ENCODE measurements at regions of chr17 and their contacts with region 1.

Region 1: DNA sequence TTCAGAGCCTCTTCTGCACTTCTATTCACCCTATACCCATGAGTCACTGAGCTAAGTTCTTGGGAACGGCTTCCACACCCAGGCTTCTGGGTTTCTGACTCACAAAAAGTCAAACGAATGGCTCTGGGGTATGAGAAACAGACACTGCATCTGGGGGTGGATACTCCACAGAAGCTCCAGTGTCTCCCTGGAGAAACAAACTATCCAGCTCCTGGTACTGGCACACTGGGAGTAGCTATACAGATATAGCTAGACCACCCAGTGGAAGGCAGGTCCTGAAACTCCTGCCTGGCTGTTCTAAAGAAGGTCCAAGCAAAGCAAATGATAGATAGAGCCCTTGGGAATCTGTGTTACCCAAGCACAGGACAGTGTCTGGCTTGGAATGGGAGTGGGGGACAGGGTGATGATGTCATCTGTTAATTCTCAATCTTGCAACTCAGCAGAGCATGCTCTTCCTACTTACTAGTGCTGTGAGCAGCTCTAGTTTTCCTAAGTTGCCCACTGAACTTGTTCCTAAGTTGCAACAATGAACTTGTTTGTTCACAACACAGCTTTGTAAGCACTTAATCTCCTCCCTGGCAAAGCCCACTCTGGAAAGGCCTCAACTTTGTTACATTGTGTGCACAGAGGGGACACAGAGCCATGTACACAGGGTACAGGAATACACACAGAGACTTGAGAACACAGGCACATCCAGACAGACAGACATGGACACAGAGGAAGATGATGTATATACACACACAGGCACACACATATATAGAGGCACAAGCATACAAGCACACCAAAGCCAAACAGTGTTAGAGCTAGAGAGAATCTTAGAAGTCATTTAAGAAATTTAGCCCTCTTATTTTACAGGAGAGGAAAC is 6.7 kb downstream of the MMP28 start:
- DNase-seq: peak in 1 of 2 experiments; percentile 85
- H3K4me3 ChIP-seq: no peak overlapping the region; the same call in 1 of the 2 replicates
- H3K27ac ChIP-seq: peak overlapping the region; percentile 80
- H3K4me1 ChIP-seq: peaks cover 66% of the 10 kb centered on the region
- H3K27me3 ChIP-seq: peaks cover 6% of the 10 kb centered on the region; the same call in 1 of the 2 replicates
- CTCF ChIP-seq: no peak

Region 2: GRCh38 chr17:35799942-35800341 is 11.2 kb after region 1 on chr17:
- CTCF ChIA-PET with region 1: no interaction called
- POLR2A ChIA-PET with region 1: no interaction called
- intact Hi-C with region 1: loop called (anchors 1 kb)
- DNase-seq: peak in 1 of 2 experiments; percentile 70
- H3K4me3 ChIP-seq: no peak overlapping the region
- H3K27ac ChIP-seq: no peak overlapping the region
- H3K4me1 ChIP-seq: peaks cover 2% of the 10 kb centered on the region; the same call in 1 of the 2 replicates
- H3K27me3 ChIP-seq: peaks cover 27% of the 10 kb centered on the region
- CTCF ChIP-seq: no peak

Region 3: GRCh38 chr17:35825206-35825605 is 36.5 kb after region 1 on chr17:
- CTCF ChIA-PET with region 1: no interaction called
- POLR2A ChIA-PET with region 1: interaction called, 19 read pairs
- intact Hi-C with region 1: no loop called
- DNase-seq: no peak
- H3K4me3 ChIP-seq: no peak overlapping the region
- H3K27ac ChIP-seq: no peak overlapping the region
- H3K4me1 ChIP-seq: no peaks in the 10 kb centered on the region
- H3K27me3 ChIP-seq: no peaks in the 10 kb centered on the region
- CTCF ChIP-seq: no peak

Region 4: DNA sequence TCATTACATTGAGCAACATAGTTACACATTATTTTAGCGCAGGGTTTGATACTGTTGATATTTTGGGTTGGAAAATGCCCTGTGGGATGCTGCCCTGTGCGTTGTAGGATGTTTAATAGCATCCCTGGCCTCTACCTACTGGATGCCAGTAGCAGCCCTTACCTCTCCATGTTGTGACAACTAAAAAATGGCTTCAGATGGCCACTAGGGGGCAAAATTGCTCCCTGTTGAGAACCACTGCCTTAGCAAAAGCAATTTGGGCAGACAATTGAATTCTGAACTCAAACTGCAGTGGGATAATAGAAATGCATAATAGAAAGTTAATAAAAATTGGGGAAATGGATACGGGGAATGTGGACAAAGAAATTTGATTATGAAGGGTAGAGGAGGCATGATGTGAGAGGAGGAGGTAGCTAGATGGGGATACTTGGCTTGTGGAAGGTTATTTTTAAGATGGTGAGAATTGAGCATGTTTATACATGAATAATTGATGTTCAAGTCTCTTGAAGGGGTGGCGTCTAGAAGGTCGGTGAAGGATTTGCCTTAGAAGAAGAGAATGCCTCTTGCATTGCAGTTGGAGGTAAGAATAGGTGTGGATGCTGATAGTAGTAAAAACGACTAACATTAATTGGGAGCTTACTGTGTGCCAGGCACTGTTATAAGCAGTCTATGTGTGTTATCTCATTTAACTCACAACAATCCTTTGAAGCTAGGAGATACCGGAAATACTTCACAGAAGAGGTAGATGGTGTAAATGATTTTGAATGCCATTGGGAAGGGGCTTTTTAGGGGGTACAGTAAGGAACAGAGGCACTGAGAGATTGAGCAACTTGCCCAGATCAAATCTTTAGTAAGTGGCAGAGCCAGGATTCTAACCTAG is 61.0 kb after region 1 on chr17:
- CTCF ChIA-PET with region 1: no interaction called
- POLR2A ChIA-PET with region 1: no interaction called
- intact Hi-C with region 1: no loop called
- DNase-seq: peak in 1 of 2 experiments; percentile 26
- H3K4me3 ChIP-seq: no peak overlapping the region
- H3K27ac ChIP-seq: no peak overlapping the region
- H3K4me1 ChIP-seq: no peaks in the 10 kb centered on the region
- H3K27me3 ChIP-seq: no peaks in the 10 kb centered on the region
- CTCF ChIP-seq: peak; percentile 90

Region 5: GRCh38 chr17:35865412-35866340 is 76.9 kb after region 1 on chr17:
- CTCF ChIA-PET with region 1: no interaction called
- POLR2A ChIA-PET with region 1: no interaction called
- intact Hi-C with region 1: no loop called
- DNase-seq: no peak
- H3K4me3 ChIP-seq: no peak overlapping the region
- H3K27ac ChIP-seq: no peak overlapping the region
- H3K4me1 ChIP-seq: no peaks in the 10 kb centered on the region; the same call in 1 of the 2 replicates
- H3K27me3 ChIP-seq: no peaks in the 10 kb centered on the region
- CTCF ChIP-seq: no peak

Region 6: DNA sequence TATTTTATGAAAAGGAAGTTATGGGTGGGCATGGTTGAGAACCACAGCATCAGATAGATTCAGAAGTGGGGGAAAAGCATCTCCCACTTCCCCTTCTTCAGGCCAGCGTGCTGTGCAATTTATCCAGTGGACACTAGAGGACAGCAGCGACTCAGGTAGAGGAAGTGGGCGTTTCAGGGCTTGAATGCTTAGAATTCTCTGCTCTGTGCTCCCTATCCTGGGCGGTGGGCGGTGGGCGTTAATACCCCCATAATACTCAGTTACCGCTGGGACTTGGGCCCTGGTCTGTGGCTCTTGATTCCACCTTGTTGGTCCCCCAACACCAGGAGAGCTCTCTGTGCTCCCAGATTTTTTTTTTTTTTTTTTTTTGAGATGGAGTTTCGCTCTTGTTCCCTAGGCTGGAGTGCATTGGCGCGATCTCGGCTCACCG is 158.4 kb after region 1 on chr17:
- CTCF ChIA-PET with region 1: no interaction called
- POLR2A ChIA-PET with region 1: no interaction called
- intact Hi-C with region 1: no loop called
- DNase-seq: peak in 1 of 2 experiments; percentile 47
- H3K4me3 ChIP-seq: no peak overlapping the region; the same call in 1 of the 2 replicates
- H3K27ac ChIP-seq: no peak overlapping the region
- H3K4me1 ChIP-seq: no peaks in the 10 kb centered on the region
- H3K27me3 ChIP-seq: peaks cover 28% of the 10 kb centered on the region
- CTCF ChIP-seq: peak; percentile 85